ENCODE measurements at regions of chr7 and their contacts with region 1.

Region 1: DNA sequence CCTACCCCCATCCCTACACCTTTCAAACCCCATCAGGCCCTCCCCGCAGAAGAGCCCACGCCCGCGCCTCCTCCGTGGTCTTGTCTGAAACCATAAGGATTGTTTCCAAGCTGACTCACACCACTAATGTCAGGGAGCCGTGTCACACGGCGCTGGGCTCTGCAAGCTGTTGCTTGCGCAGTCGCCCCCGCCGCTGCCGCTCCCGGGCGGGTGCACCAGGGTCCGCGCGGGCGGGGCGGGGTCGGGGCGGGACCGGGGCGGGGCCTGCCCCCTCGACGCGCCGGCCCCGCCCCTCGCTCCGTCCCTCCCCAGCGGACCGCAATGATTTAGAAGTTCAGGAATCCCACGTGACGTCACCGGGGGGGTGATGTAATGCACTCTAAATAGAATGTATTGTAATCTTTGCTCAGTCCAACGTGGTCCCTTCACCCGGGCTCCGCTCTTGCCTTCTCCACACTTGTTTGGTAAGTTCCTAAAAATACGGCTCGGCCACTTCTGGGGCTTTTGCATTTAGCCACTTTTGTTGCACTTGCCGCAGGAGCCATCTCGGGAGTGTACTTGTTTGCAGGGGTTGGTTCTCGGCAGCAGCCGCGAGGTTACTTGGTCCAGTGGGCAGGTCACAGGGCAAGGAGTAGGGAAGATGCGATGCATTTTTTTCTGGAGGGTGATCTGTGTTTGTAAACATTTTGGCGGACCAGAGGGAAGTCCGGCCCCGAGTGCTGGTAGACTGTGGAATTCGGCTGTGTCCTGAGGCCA is 3.2 kb upstream of the CREB5 start:
- DNase-seq: peak; percentile 98 to 99
- H3K4me3 ChIP-seq: peak overlapping the region; percentile 76 to 77
- H3K27ac ChIP-seq: peak overlapping the region; percentile 77 to 81
- H3K4me1 ChIP-seq: peaks cover 0 to 35% (median 21%) of the 10 kb centered on the region in 4 donors
- H3K27me3 ChIP-seq: no peaks in the 10 kb centered on the region
- CTCF ChIP-seq: no peak

Region 2: GRCh38 chr7:27662490-27663205 is 746.5 kb before region 1 on chr7 and contains the start of gene HIBADH:
- intact Hi-C with region 1: loop called (anchors 10 kb)
- DNase-seq: peak; percentile 100
- H3K4me3 ChIP-seq: peak within 1 kb of the TSS; percentile 71 to 90
- H3K27ac ChIP-seq: peak within 1 kb of the TSS; percentile 86 to 96
- H3K4me1 ChIP-seq: peaks cover 0 to 15% (median 7%) of the 10 kb centered on the region in 4 donors
- H3K27me3 ChIP-seq: no peaks in the 10 kb centered on the region
- CTCF ChIP-seq: peak; percentile 26 to 48

Region 3: GRCh38 chr7:28626624-28627262 is 217.6 kb after region 1 on chr7:
- intact Hi-C with region 1: loop called (anchors 10 kb)
- DNase-seq: peak in 1 of 2 donors; percentile 26
- H3K4me3 ChIP-seq: no peak overlapping the region
- H3K27ac ChIP-seq: no peak overlapping the region
- H3K4me1 ChIP-seq: peaks cover 0 to 92% (median 2%) of the 10 kb centered on the region in 4 donors
- H3K27me3 ChIP-seq: no peaks in the 10 kb centered on the region
- CTCF ChIP-seq: peak; percentile 45 to 48

Region 4: DNA sequence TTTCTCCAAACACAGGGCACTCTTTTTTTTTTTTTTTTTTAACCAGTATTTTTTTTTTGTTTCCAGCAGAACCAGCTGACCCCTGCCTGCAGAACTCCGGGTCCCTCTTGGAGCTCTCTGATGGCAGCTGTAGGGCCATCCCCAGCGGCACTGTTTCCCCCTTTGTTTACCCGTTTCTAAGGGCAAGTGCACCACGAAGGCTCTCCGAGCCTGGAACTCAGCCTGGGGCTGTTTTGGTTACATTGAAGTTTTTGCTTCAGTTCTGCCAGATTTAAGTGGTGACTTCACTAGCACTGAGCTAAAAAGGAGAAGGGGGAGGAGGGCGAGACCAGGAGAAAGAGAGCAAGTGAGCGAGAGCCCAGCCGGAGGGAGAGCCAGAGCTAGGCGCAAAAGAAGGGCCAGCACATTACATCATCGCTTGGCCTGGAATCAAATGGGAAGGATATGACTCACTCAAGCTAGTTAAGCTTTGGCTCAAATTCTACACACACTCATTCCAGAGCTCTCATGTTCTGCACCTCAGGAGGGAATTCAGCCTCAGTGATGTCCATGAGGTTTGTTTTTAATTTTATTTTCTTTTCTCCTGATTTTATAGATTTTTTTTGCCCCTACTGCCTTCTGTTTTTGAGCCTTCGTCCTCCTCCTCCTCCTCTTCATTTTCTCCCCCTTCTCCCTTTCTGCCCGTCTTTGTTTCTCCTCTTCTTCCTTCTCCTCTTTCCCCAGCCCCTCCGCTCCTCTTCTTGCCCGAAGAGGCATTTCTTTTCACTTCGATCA is 276.7 kb after region 1 on chr7:
- intact Hi-C with region 1: loop called (anchors 1 kb)
- DNase-seq: peak; percentile 96 to 98
- H3K4me3 ChIP-seq: peak overlapping the region; percentile 47 to 50
- H3K27ac ChIP-seq: peak overlapping the region; percentile 72 to 73
- H3K4me1 ChIP-seq: peaks cover 0 to 38% (median 16%) of the 10 kb centered on the region in 4 donors
- H3K27me3 ChIP-seq: no peaks in the 10 kb centered on the region
- CTCF ChIP-seq: no peak